ENCODE measurements at regions of chr20 and their contacts with region 1.

Region 1: GRCh38 chr20:45011108-45011526 is 44.8 kb downstream of the STK4 start:
- DNase-seq: peak in 7 of 9 donors; percentile 24 to 47 (median 36)
- ATAC-seq: peak; percentile 86
- H3K4me3 ChIP-seq: no peak overlapping the region
- H3K4me3 Mint-ChIP-seq: peak overlapping the region in 3 of 10 donors; percentile 11 to 48 (median 42)
- H3K27ac ChIP-seq: peak overlapping the region; percentile 32
- H3K27ac Mint-ChIP-seq: peak overlapping the region in 7 of 9 donors; percentile 1 to 79 (median 30)
- H3K4me1 ChIP-seq: peaks cover under 1 to 43% of the 10 kb centered on the region in 2 donors
- H3K4me1 Mint-ChIP-seq: peaks cover 31 to 81% (median 70%) of the 10 kb centered on the region in 7 donors
- H3K27me3 ChIP-seq: no peaks in the 10 kb centered on the region
- H3K27me3 Mint-ChIP-seq: no peaks in the 10 kb centered on the region

Region 2: GRCh38 chr20:44966030-44966961 is 44.8 kb before region 1 on chr20 and contains the start of gene STK4:
- CTCF ChIA-PET with region 1: interaction called, 7 read pairs
- POLR2A ChIA-PET with region 1: interaction called, 8 read pairs
- intact Hi-C with region 1: loop called in 1 of 2 experiments (anchors 1 kb)
- DNase-seq: peak; percentile 93 to 98 (median 96)
- ATAC-seq: peak; percentile 93
- H3K4me3 ChIP-seq: peak within 1 kb of the TSS; percentile 75
- H3K4me3 Mint-ChIP-seq: peak within 1 kb of the TSS; percentile 93 to 100 (median 95)
- H3K27ac ChIP-seq: peak within 1 kb of the TSS; percentile 91
- H3K27ac Mint-ChIP-seq: peak within 1 kb of the TSS; percentile 80 to 98 (median 90)
- H3K4me1 ChIP-seq: peaks cover 16 to 17% of the 10 kb centered on the region in 2 donors
- H3K4me1 Mint-ChIP-seq: peaks cover 32 to 60% (median 55%) of the 10 kb centered on the region in 7 donors
- H3K27me3 ChIP-seq: no peaks in the 10 kb centered on the region
- H3K27me3 Mint-ChIP-seq: no peaks in the 10 kb centered on the region
- total RNA-seq, gene STK4: 207 to 383 (median 267) TPM

Region 3: DNA sequence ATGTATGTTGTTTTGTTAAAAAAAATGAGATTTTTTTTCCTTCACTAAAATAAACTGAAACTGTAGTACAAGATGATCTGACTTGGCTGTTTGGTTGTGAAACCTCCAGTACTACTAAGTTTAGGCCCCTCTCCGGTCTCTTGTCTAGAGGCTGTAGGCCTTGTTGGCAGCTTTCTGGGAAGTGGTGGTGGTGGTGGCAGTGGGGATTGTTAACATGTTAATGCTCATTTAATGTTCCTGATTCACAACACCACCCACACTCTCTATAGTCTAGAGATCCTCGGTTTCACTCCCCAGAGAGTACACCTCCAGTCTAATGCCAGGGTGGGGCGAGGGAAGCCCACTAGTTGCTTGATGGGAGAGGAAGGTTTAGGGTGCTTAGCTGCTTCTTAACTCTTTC is 20.7 kb before region 1 on chr20:
- CTCF ChIA-PET with region 1: interaction called, 8 read pairs
- POLR2A ChIA-PET with region 1: interaction called, 6 read pairs
- intact Hi-C with region 1: loop called in 1 of 2 experiments (anchors 2 kb)
- DNase-seq: peak in 1 of 9 donors; percentile 56
- ATAC-seq: peak; percentile 55
- H3K4me3 ChIP-seq: peak overlapping the region; percentile 42
- H3K4me3 Mint-ChIP-seq: peak overlapping the region; percentile 77 to 95 (median 88)
- H3K27ac ChIP-seq: peak overlapping the region; percentile 76
- H3K27ac Mint-ChIP-seq: peak overlapping the region; percentile 72 to 96 (median 92)
- H3K4me1 ChIP-seq: peaks cover 35 to 66% of the 10 kb centered on the region in 2 donors
- H3K4me1 Mint-ChIP-seq: peaks cover 57 to 97% (median 80%) of the 10 kb centered on the region in 7 donors
- H3K27me3 ChIP-seq: no peaks in the 10 kb centered on the region
- H3K27me3 Mint-ChIP-seq: no peaks in the 10 kb centered on the region

Region 4: GRCh38 chr20:45111799-45112471 is 100.8 kb after region 1 on chr20:
- CTCF ChIA-PET with region 1: no interaction called
- POLR2A ChIA-PET with region 1: no interaction called
- intact Hi-C with region 1: loop called in 1 of 2 experiments (anchors 1 kb)
- DNase-seq: no peak
- ATAC-seq: no peak
- H3K4me3 ChIP-seq: no peak overlapping the region
- H3K4me3 Mint-ChIP-seq: no peak overlapping the region
- H3K27ac ChIP-seq: no peak overlapping the region
- H3K27ac Mint-ChIP-seq: no peak overlapping the region
- H3K4me1 ChIP-seq: no peaks in the 10 kb centered on the region
- H3K4me1 Mint-ChIP-seq: peaks cover 0 to 6% (median 4%) of the 10 kb centered on the region in 7 donors
- H3K27me3 ChIP-seq: no peaks in the 10 kb centered on the region
- H3K27me3 Mint-ChIP-seq: peaks cover 0 to 11% (median 2%) of the 10 kb centered on the region in 5 donors

Region 5: GRCh38 chr20:45206746-45207145 is 195.6 kb after region 1 on chr20 and contains the start of gene SEMG1:
- CTCF ChIA-PET with region 1: no interaction called
- POLR2A ChIA-PET with region 1: no interaction called
- intact Hi-C with region 1: no loop called
- DNase-seq: no peak
- ATAC-seq: no peak
- H3K4me3 ChIP-seq: no peak within 1 kb of the TSS
- H3K4me3 Mint-ChIP-seq: no peak within 1 kb of the TSS
- H3K27ac ChIP-seq: no peak within 1 kb of the TSS
- H3K27ac Mint-ChIP-seq: no peak within 1 kb of the TSS
- H3K4me1 ChIP-seq: no peaks in the 10 kb centered on the region
- H3K4me1 Mint-ChIP-seq: peaks cover 0 to 2% (median 0%) of the 10 kb centered on the region in 7 donors
- H3K27me3 ChIP-seq: peaks cover 0 to 4% of the 10 kb centered on the region in 2 donors
- H3K27me3 Mint-ChIP-seq: peaks cover 37 to 64% (median 41%) of the 10 kb centered on the region in 5 donors
- total RNA-seq, gene SEMG1: not detected

Region 6: DNA sequence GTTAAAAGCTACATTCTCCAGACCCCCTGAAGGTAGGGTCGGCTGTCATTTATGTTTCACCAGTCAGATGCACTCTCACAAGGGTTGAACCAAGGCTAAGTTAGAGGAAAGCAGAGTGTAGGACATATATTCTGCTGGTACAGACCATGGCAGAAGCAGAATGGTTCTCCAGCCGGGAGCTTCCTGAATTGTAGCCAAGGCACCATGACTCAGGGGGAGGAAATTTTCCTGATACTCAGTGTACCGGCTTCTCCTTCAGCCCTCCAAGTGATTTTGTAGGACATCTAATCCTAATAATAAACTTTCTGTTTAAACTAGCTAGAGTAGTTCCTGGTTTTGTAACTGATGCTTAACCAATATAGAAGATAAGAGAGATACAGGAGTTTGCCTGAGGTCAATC is 257.4 kb after region 1 on chr20:
- CTCF ChIA-PET with region 1: no interaction called
- POLR2A ChIA-PET with region 1: no interaction called
- intact Hi-C with region 1: no loop called
- DNase-seq: no peak
- ATAC-seq: no peak
- H3K4me3 ChIP-seq: no peak overlapping the region
- H3K4me3 Mint-ChIP-seq: no peak overlapping the region
- H3K27ac ChIP-seq: no peak overlapping the region
- H3K27ac Mint-ChIP-seq: no peak overlapping the region
- H3K4me1 ChIP-seq: no peaks in the 10 kb centered on the region
- H3K4me1 Mint-ChIP-seq: no peaks in the 10 kb centered on the region
- H3K27me3 ChIP-seq: no peaks in the 10 kb centered on the region
- H3K27me3 Mint-ChIP-seq: peaks cover 25 to 64% (median 41%) of the 10 kb centered on the region in 5 donors

Region 7: DNA sequence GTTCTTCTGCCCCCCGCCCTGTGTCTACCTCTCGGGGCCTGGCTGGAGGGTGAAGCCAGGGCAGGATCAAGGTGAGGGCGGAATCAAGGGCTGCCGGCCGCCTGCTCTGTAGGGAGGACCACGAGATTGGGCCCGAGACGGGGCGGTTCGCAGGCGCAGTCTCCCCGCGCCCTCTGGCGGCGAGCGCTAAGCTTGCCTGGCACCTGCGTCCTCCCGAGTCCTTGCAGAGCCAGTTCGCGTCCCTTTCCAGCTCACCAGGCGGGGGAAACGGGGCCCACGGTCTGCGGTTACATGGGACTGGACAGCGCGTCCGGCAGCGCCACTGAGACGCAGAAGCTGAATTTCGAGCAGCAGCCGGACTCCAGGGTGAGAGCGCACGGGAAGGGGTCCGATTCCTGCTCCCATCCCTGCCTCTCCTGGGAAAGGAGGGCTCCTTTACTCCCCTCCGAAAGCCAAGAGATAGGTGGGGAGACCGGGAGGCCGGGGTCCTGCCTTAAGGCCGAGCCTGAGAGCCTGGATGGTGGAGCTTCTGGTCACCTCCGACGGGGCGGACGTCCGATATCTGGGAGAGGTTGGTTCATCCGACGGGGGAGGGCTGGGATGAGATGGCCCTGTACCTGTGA is 300.6 kb after region 1 on chr20:
- CTCF ChIA-PET with region 1: no interaction called
- POLR2A ChIA-PET with region 1: no interaction called
- intact Hi-C with region 1: loop called in 1 of 2 experiments (anchors 5 kb)
- DNase-seq: peak in 8 of 9 donors; percentile 37 to 73 (median 42)
- ATAC-seq: peak; percentile 76
- H3K4me3 ChIP-seq: no peak overlapping the region
- H3K4me3 Mint-ChIP-seq: peak overlapping the region in 1 of 10 donors; percentile 10
- H3K27ac ChIP-seq: no peak overlapping the region
- H3K27ac Mint-ChIP-seq: no peak overlapping the region
- H3K4me1 ChIP-seq: no peaks in the 10 kb centered on the region
- H3K4me1 Mint-ChIP-seq: peaks cover 7 to 24% (median 10%) of the 10 kb centered on the region in 7 donors
- H3K27me3 ChIP-seq: no peaks in the 10 kb centered on the region
- H3K27me3 Mint-ChIP-seq: peaks cover 25 to 67% (median 62%) of the 10 kb centered on the region in 5 donors

Measured in naive thymus-derived CD4-positive, alpha-beta T cell (primary cell).